CD8-positive, alpha-beta T cell (primary cell): ENCODE measurements at regions of chr15 and their contacts with region 1.

Region 1: GRCh38 chr15:90143166-90143655 is 40.9 kb upstream of the IDH2 start:
- DNase-seq: peak; percentile 25 to 73 (median 62)
- ATAC-seq: peak; percentile 66
- H3K4me3 ChIP-seq: peak overlapping the region in 1 of 2 experiments; percentile 0
- H3K4me3 Mint-ChIP-seq: peak overlapping the region; percentile 61
- H3K27ac ChIP-seq: no peak overlapping the region
- H3K27ac Mint-ChIP-seq: no peak overlapping the region
- H3K4me1 ChIP-seq: peaks cover 16% of the 10 kb centered on the region
- H3K4me1 Mint-ChIP-seq: peaks cover 24% of the 10 kb centered on the region
- H3K27me3 ChIP-seq: no peaks in the 10 kb centered on the region
- H3K27me3 Mint-ChIP-seq: no peaks in the 10 kb centered on the region
- CTCF ChIP-seq: peak; percentile 70

Region 2: GRCh38 chr15:90286678-90287077 is 143.5 kb after region 1 on chr15:
- CTCF ChIA-PET with region 1: interaction called, 8 read pairs
- POLR2A ChIA-PET with region 1: no interaction called
- intact Hi-C with region 1: loop called (anchors 1 kb)
- DNase-seq: peak in 6 of 9 experiments; percentile 24 to 77 (median 55)
- ATAC-seq: peak; percentile 94
- H3K4me3 ChIP-seq: no peak overlapping the region
- H3K4me3 Mint-ChIP-seq: no peak overlapping the region
- H3K27ac ChIP-seq: no peak overlapping the region
- H3K27ac Mint-ChIP-seq: no peak overlapping the region
- H3K4me1 ChIP-seq: no peaks in the 10 kb centered on the region
- H3K4me1 Mint-ChIP-seq: no peaks in the 10 kb centered on the region
- H3K27me3 ChIP-seq: no peaks in the 10 kb centered on the region
- H3K27me3 Mint-ChIP-seq: no peaks in the 10 kb centered on the region
- CTCF ChIP-seq: peak; percentile 78

Region 3: DNA sequence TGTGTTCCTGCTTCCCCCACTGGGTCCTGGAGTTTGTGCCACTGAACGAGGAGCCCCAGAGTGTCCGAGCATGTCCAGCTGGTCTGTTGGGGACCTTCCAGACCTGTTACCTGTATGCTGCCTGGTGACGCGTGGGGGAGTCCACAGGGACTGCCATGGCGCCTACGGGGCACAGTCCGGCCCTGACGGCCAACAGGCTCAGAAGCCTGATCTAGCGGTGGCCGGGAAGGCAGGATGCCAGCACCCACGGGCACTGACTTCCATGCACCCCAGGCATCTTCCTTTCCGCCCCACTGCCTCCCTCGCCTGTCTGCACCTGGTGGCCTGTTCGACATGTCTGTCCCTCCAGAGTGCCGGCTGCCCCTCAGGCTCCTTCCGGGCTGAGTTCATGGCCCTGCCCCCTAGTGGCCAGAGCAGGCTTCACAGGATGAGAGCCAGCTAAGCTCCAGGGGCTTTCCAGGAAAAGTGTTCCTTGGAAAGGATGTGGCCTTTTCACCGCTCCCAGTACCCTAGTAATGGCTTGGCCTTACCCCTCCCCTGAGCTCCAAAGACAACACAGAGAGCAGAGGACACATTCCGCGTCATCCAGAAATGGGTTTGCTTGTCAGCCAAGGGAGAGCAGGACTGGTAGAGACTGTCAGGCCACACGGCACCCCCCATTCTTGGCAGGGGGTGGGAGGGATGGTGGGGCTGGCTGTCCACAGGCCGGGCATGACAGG is 157.9 kb after region 1 on chr15:
- CTCF ChIA-PET with region 1: no interaction called
- POLR2A ChIA-PET with region 1: interaction called, 3 read pairs
- intact Hi-C with region 1: loop called in 1 of 2 experiments (anchors 1 kb)
- DNase-seq: peak; percentile 18 to 72 (median 61)
- ATAC-seq: peak; percentile 49
- H3K4me3 ChIP-seq: no peak overlapping the region
- H3K4me3 Mint-ChIP-seq: no peak overlapping the region
- H3K27ac ChIP-seq: no peak overlapping the region
- H3K27ac Mint-ChIP-seq: no peak overlapping the region
- H3K4me1 ChIP-seq: peaks cover 4% of the 10 kb centered on the region
- H3K4me1 Mint-ChIP-seq: peaks cover 9% of the 10 kb centered on the region
- H3K27me3 ChIP-seq: no peaks in the 10 kb centered on the region
- H3K27me3 Mint-ChIP-seq: no peaks in the 10 kb centered on the region
- CTCF ChIP-seq: peak; percentile 81